ENCODE measurements at regions of chr5 and their contacts with region 1.

Region 1: DNA sequence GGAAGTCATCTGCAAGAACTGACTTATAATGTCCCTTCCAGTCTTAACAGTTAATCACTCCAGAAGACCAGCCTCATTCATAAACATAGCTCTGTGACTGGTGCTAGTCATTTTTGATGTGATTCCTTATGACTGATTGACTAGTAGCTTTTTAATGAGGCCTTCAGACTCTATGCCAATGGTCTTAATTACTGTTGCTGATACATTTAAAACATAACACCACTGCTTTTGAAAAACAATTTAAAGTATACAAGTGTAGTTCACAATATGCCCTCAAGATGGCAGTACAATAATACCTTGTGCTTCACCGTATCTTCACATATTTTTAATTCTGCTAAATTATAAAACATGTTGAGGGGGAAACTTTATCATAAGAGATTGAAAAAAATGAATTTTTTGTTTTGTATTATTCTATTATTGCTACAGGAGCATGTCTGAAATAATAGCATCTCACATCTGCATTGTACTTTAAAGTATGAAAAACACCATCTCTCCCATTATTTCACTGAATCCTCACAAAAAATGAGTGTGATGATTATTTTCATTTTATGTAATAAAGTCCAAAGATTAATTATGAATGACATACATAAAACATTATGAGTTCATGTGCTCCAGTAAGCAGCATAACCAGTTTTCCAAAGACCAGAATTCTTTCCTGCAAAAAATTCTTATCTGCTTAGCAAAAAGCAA is 55.2 kb upstream of the SHISAL2B start:
- DNase-seq: no peak
- H3K4me3 ChIP-seq: no peak overlapping the region
- H3K27ac ChIP-seq: no peak overlapping the region
- H3K4me1 ChIP-seq: no peaks in the 10 kb centered on the region
- H3K27me3 ChIP-seq: no peaks in the 10 kb centered on the region
- CTCF ChIP-seq: peak; percentile 60 to 69 (median 69)
- EP300 ChIP-seq: no peak
- POLR2A ChIP-seq: no peak

Region 2: GRCh38 chr5:64784451-64785025 is 149.4 kb after region 1 on chr5:
- intact Hi-C with region 1: loop called in 3 of 4 experiments (anchors 5 kb)
- DNase-seq: peak; percentile 58 to 78 (median 66)
- H3K4me3 ChIP-seq: no peak overlapping the region
- H3K27ac ChIP-seq: no peak overlapping the region
- H3K4me1 ChIP-seq: no peaks in the 10 kb centered on the region
- H3K27me3 ChIP-seq: no peaks in the 10 kb centered on the region
- CTCF ChIP-seq: peak; percentile 66 to 87 (median 82)
- EP300 ChIP-seq: no peak
- POLR2A ChIP-seq: no peak

Measured in ovary (tissue), 10 donors.